Mammary epithelial cell (primary cell): ENCODE measurements at regions of chr12 and their contacts with region 1.

Region 1: GRCh38 chr12:98644711-98645402 is at the starts of genes APAF1 and IKBIP:
- DNase-seq: peak; percentile 98
- H3K4me3 ChIP-seq: peak within 1 kb of the TSS; percentile 90 to 98 (median 97)
- H3K27ac ChIP-seq: peak within 1 kb of the TSS; percentile 84
- H3K4me1 ChIP-seq: peaks cover 5% of the 10 kb centered on the region
- H3K27me3 ChIP-seq: no peaks in the 10 kb centered on the region
- CTCF ChIP-seq: no peak
- total RNA-seq, gene APAF1: 17.0 to 18.0 TPM
- total RNA-seq, gene IKBIP: 46.2 TPM

Region 2: DNA sequence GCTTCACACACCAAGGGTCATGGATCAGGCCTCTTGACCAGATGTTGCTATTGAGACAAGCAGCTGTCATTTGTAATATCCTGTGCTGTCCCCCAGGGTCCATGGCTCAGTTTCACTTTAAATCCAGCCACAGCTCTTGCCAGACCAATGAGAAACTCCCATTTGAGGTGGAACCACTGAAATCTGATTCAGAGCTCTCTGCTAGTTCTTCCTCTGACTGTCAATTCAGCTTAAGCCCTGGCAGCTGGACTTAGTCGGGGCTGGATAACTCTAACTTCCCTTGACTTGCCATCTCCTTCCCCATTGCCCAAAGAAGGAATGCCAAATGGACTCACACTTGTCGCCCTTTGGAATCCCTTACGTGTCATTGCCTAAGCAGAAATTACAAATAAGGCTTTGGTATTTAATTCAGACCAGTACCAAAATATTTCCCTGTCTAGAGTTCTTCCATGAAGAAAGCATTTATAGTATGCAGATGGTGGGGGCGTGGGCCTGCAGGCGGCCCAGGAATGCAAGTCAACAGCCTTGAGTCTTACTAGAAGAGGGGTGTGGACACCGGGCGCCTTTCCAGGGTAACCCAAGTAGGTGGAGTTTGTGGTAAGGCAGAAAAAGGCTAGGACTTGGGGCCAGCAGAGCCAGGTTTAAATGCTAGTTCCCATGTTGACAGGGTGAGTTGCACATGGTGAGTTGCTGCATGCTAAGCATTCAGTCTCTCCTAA is 226.3 kb before region 1 on chr12:
- CTCF ChIA-PET with region 1: no interaction called
- dilution Hi-C with region 1: no loop called
- in situ Hi-C with region 1: no loop called
- intact Hi-C with region 1: loop called (anchors 5 kb)
- DNase-seq: peak; percentile 90
- H3K4me3 ChIP-seq: peak overlapping the region in 1 of 3 experiments; percentile 7
- H3K27ac ChIP-seq: peak overlapping the region; percentile 32
- H3K4me1 ChIP-seq: peaks cover 19% of the 10 kb centered on the region
- H3K27me3 ChIP-seq: no peaks in the 10 kb centered on the region
- CTCF ChIP-seq: no peak

Region 3: GRCh38 chr12:98503592-98504367 is 141.1 kb before region 1 on chr12:
- CTCF ChIA-PET with region 1: no interaction called
- dilution Hi-C with region 1: no loop called
- in situ Hi-C with region 1: loop called in 1 of 2 experiments (anchors 10 kb)
- intact Hi-C with region 1: loop called (anchors 2 kb)
- DNase-seq: peak; percentile 90
- H3K4me3 ChIP-seq: peak overlapping the region; percentile 64 to 71 (median 66)
- H3K27ac ChIP-seq: peak overlapping the region; percentile 58
- H3K4me1 ChIP-seq: no peaks in the 10 kb centered on the region
- H3K27me3 ChIP-seq: no peaks in the 10 kb centered on the region
- CTCF ChIP-seq: no peak

Region 4: GRCh38 chr12:98516184-98516873 is 128.5 kb before region 1 on chr12:
- CTCF ChIA-PET with region 1: no interaction called
- dilution Hi-C with region 1: no loop called
- in situ Hi-C with region 1: no loop called
- intact Hi-C with region 1: loop called (anchors 5 kb)
- DNase-seq: peak; percentile 78
- H3K4me3 ChIP-seq: peak overlapping the region; percentile 86 to 90 (median 87)
- H3K27ac ChIP-seq: peak overlapping the region; percentile 69
- H3K4me1 ChIP-seq: no peaks in the 10 kb centered on the region
- H3K27me3 ChIP-seq: no peaks in the 10 kb centered on the region
- CTCF ChIP-seq: peak; percentile 51 to 78

Region 5: DNA sequence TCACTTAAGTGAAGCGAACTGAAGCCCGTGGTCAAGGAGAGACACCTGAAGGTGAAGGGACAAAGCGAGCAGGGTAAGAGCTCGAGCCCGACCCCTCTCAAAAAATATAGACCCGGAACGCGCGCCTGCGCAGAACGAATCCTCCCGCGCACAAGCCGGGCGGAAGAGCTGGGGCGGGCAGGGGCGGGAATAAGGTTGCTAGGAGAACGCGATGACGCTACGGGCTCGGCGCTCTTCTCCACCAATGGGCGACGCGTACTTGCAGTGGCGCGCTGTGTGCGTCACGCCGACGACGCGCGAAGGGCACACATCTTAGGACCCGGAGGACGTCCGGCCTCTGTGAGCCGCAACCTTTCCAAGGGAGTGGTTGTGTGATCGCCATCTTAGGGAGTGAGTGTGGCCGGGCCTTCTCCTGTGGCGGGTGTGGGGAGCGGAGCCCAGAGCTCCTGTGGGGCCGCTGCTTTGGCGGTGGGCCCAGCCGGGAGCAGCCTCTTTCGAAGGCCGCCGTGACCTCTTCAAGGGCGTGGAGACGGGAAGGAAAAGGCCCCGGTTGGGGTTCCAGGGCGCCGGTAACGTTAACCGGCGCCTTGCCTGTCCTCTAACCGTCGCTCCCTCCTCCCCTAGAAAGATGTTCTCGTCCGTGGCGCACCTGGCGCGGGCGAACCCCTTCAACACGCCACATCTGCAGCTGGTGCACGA is 51.4 kb before region 1 on chr12 and contains the start of gene SLC25A3:
- CTCF ChIA-PET with region 1: no interaction called
- dilution Hi-C with region 1: no loop called
- in situ Hi-C with region 1: no loop called
- intact Hi-C with region 1: loop called (anchors 1 kb)
- DNase-seq: peak; percentile 96
- H3K4me3 ChIP-seq: peak within 1 kb of the TSS; percentile 93 to 100 (median 100)
- H3K27ac ChIP-seq: peak within 1 kb of the TSS; percentile 92
- H3K4me1 ChIP-seq: peaks cover 21% of the 10 kb centered on the region
- H3K27me3 ChIP-seq: no peaks in the 10 kb centered on the region
- CTCF ChIP-seq: no peak
- total RNA-seq, gene SLC25A3: 591 to 639 TPM